ENCODE measurements at regions of chr10 and their contacts with region 1.

Region 1: GRCh38 chr10:119061352-119061751 is 19.3 kb downstream of the EIF3A start:
- DNase-seq: no peak
- H3K4me3 ChIP-seq: no peak overlapping the region
- H3K27ac ChIP-seq: no peak overlapping the region
- H3K4me1 ChIP-seq: peaks cover 5% of the 10 kb centered on the region
- H3K27me3 ChIP-seq: no peaks in the 10 kb centered on the region
- CTCF ChIP-seq: no peak
- POLR2A ChIP-seq: no peak

Region 2: DNA sequence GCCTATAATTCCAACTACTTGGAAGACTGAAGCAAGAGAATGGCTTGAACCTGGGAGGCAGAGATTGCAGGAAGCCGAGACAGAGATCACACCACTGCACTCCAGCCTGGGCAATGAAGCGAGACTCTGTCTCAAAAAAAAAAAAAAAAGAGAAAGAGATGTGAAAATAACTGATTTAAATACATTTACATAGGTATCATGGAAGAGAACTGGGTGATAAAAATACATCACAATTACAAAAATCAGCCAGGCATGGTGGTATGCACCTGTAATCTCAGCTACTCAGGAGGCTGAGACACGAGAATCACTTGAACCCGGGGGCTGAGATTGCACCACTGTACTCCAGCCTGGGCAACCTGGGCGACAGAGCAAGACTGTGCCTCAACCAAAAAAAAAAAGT is 12.0 kb before region 1 on chr10:
- intact Hi-C with region 1: loop called (anchors 2 kb)
- DNase-seq: no peak
- H3K4me3 ChIP-seq: no peak overlapping the region
- H3K27ac ChIP-seq: no peak overlapping the region
- H3K4me1 ChIP-seq: no peaks in the 10 kb centered on the region
- H3K27me3 ChIP-seq: no peaks in the 10 kb centered on the region
- CTCF ChIP-seq: no peak
- POLR2A ChIP-seq: no peak

Region 3: DNA sequence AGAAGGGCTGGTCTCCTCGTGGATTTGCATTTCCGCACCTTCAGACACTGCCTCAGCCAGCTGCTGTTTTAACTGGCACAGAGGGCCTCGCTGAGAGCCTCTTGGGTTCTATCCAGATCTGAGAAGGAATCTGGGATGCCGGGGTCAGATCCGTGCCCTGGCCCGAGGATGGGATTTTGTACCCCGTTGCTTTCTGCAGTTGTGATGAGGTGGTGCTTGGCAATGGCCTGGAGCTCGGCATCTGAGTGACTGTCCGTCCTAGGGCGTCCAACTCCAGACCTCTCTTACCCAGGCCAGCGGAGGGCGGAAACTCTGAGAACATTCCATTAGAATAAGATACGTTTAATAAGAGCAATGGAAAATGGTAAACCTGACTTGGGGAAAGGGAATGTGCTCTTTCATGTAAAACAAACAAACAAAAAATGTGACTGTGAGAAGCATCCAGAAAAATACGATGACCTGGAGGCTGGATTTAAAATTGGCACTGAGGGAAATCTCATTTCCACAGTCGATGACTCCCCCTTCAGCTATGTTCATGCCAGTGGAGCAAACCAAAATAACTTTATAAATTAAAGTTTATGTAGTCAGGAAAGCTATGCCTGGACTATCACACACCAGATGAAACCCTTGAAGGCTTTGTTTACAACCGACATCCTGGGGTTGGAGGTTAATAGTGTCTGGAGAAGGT is 185.7 kb after region 1 on chr10:
- intact Hi-C with region 1: no loop called
- DNase-seq: no peak
- H3K4me3 ChIP-seq: peak overlapping the region in 1 of 2 donors; percentile 12
- H3K27ac ChIP-seq: peak overlapping the region; percentile 60
- H3K4me1 ChIP-seq: peaks cover 52% of the 10 kb centered on the region
- H3K27me3 ChIP-seq: no peaks in the 10 kb centered on the region
- CTCF ChIP-seq: no peak
- POLR2A ChIP-seq: no peak